ENCODE measurements at regions of chr3 and their contacts with region 1.

Region 1: GRCh38 chr3:48561045-48561736 is 2.4 kb downstream of the UCN2 start:
- DNase-seq: peak; percentile 77
- ATAC-seq: peak; percentile 30

Region 2: DNA sequence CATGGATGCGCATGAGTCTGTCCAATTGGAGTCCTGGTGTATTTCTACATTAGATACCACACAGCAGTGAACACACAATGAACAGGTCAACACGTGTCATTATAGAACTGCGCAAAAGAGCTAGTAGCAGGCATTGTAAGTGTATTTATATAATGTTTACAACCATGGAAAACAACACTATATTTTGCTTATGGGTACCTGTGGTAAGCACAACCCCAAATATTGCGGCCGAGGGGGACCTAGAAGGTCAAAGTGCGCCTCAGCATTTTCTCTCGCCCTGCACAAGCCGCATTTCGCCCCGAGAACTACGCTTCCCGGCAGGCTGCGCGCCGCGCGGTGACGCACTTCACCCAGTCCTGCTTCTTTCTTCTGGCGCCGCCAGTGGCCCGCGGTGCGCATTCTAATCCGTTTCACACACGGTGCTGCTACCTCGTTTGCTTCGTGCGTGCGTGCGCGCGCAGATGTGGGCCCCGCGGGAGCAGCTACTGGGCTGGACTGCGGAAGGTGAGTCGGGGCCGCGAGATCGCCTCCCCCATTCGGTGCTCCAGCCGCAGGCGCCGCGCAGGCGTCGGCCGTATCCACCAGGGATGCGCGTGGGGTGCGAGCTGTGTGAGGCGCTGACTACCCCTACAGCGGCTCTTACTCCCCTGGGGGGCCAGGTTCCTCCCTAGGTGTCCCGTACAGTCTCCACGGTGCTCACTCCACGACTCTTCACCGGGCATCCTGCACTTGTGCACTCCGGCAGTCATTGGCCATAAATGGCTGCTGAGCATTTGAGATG is 320.3 kb before region 1 on chr3 and contains the start of gene ZNF589:
- intact Hi-C with region 1: no loop called
- DNase-seq: peak; percentile 97
- ATAC-seq: peak; percentile 98
- total RNA-seq, gene ZNF589: 5.4 TPM

Region 3: GRCh38 chr3:48439820-48440589 is 121.2 kb before region 1 on chr3 and contains the starts of genes CCDC51 and TMA7:
- intact Hi-C with region 1: no loop called
- DNase-seq: peak; percentile 99
- ATAC-seq: peak; percentile 98
- total RNA-seq, gene CCDC51: 11.9 TPM
- total RNA-seq, gene TMA7: 237 TPM

Region 4: GRCh38 chr3:48609088-48610005 is 48.2 kb after region 1 on chr3 and contains the start of gene UQCRC1:
- intact Hi-C with region 1: loop called (anchors 5 kb)
- DNase-seq: peak; percentile 96
- ATAC-seq: peak; percentile 99
- total RNA-seq, gene UQCRC1: 1,265 TPM

Region 5: GRCh38 chr3:48847504-48848423 is 286.6 kb after region 1 on chr3 and contains the start of gene PRKAR2A:
- intact Hi-C with region 1: no loop called
- DNase-seq: peak; percentile 95
- ATAC-seq: peak; percentile 97
- total RNA-seq, gene PRKAR2A: 50.0 TPM

Region 6: GRCh38 chr3:49093853-49094767 is 532.9 kb after region 1 on chr3 and contains the start of gene QRICH1:
- intact Hi-C with region 1: no loop called
- DNase-seq: peak; percentile 98
- ATAC-seq: peak; percentile 94
- total RNA-seq, gene QRICH1: 46.2 TPM

Measured in Right ventricle myocardium superior (tissue), 1 donor.